ENCODE measurements at regions of chr2 and their contacts with region 1.

Region 1: GRCh38 chr2:143205106-143205764 is 76.0 kb downstream of the ARHGAP15 start:
- DNase-seq: peak in 2 of 9 experiments; percentile 52 to 71
- ATAC-seq: peak; percentile 77
- H3K4me3 ChIP-seq: no peak overlapping the region
- H3K4me3 Mint-ChIP-seq: no peak overlapping the region
- H3K27ac ChIP-seq: peak overlapping the region in 1 of 2 experiments; percentile 53
- H3K27ac Mint-ChIP-seq: peak overlapping the region; percentile 69
- H3K4me1 ChIP-seq: peaks cover 21% of the 10 kb centered on the region
- H3K4me1 Mint-ChIP-seq: peaks cover 66% of the 10 kb centered on the region
- H3K27me3 ChIP-seq: no peaks in the 10 kb centered on the region
- H3K27me3 Mint-ChIP-seq: no peaks in the 10 kb centered on the region
- CTCF ChIP-seq: peak; percentile 52

Region 2: GRCh38 chr2:143169105-143169504 is 36.1 kb before region 1 on chr2:
- CTCF ChIA-PET with region 1: interaction called, 3 read pairs
- POLR2A ChIA-PET with region 1: no interaction called
- intact Hi-C with region 1: loop called in 1 of 2 experiments (anchors 5 kb)
- DNase-seq: no peak
- ATAC-seq: no peak
- H3K4me3 ChIP-seq: no peak overlapping the region
- H3K4me3 Mint-ChIP-seq: no peak overlapping the region
- H3K27ac ChIP-seq: no peak overlapping the region
- H3K27ac Mint-ChIP-seq: no peak overlapping the region
- H3K4me1 ChIP-seq: peaks cover 23% of the 10 kb centered on the region
- H3K4me1 Mint-ChIP-seq: peaks cover 83% of the 10 kb centered on the region
- H3K27me3 ChIP-seq: no peaks in the 10 kb centered on the region
- H3K27me3 Mint-ChIP-seq: no peaks in the 10 kb centered on the region
- CTCF ChIP-seq: no peak

Region 3: DNA sequence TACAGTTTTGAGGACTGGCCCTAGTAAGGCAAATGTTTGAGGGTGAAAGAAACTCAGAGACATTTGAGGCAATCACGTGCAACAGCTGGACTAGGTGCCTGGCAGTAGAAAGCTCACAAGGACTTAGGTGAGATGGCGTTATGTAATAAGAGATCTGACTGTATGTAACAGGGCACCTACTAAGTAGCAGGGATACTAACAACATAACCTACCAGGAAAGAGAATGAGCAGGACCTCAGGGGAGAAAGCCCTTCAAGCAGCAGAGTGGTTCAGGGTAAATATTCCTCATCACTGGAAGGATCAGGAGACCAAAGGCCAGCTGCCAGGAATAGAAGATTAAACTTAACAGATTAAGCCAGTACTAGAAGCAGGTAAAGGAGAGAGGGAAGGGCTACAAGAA is 22.6 kb before region 1 on chr2:
- CTCF ChIA-PET with region 1: interaction called, 3 read pairs
- POLR2A ChIA-PET with region 1: interaction called, 6 read pairs
- intact Hi-C with region 1: loop called in 1 of 2 experiments (anchors 2 kb)
- DNase-seq: no peak
- ATAC-seq: no peak
- H3K4me3 ChIP-seq: no peak overlapping the region
- H3K4me3 Mint-ChIP-seq: no peak overlapping the region
- H3K27ac ChIP-seq: no peak overlapping the region
- H3K27ac Mint-ChIP-seq: peak overlapping the region; percentile 28
- H3K4me1 ChIP-seq: peaks cover 37% of the 10 kb centered on the region
- H3K4me1 Mint-ChIP-seq: peaks cover 76% of the 10 kb centered on the region
- H3K27me3 ChIP-seq: no peaks in the 10 kb centered on the region
- H3K27me3 Mint-ChIP-seq: no peaks in the 10 kb centered on the region
- CTCF ChIP-seq: no peak

Region 4: DNA sequence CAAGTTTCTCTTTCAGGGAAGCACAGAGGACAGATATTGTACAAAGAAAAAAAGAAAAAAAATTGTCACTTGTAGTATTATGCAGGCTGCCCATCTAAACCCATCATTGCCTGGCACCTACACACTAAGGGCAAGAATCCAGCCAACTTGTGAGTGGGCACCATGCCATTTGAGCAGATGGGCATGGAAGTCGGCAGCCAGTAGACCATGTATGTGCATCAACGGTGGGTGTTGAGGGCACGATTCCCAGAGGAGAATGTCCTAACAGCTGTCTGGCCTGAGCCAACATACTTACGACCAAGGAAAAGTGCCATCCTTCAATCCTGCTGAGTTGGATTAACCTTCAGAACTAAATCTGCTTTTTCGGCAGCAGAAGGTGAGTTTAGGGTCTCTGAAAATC is 12.1 kb before region 1 on chr2:
- CTCF ChIA-PET with region 1: interaction called, 6 read pairs
- POLR2A ChIA-PET with region 1: no interaction called
- intact Hi-C with region 1: loop called in 1 of 2 experiments (anchors 2 kb)
- DNase-seq: no peak
- ATAC-seq: no peak
- H3K4me3 ChIP-seq: no peak overlapping the region
- H3K4me3 Mint-ChIP-seq: no peak overlapping the region
- H3K27ac ChIP-seq: no peak overlapping the region
- H3K27ac Mint-ChIP-seq: peak overlapping the region; percentile 62
- H3K4me1 ChIP-seq: peaks cover 11% of the 10 kb centered on the region
- H3K4me1 Mint-ChIP-seq: peaks cover 58% of the 10 kb centered on the region
- H3K27me3 ChIP-seq: no peaks in the 10 kb centered on the region
- H3K27me3 Mint-ChIP-seq: no peaks in the 10 kb centered on the region
- CTCF ChIP-seq: no peak

Region 5: DNA sequence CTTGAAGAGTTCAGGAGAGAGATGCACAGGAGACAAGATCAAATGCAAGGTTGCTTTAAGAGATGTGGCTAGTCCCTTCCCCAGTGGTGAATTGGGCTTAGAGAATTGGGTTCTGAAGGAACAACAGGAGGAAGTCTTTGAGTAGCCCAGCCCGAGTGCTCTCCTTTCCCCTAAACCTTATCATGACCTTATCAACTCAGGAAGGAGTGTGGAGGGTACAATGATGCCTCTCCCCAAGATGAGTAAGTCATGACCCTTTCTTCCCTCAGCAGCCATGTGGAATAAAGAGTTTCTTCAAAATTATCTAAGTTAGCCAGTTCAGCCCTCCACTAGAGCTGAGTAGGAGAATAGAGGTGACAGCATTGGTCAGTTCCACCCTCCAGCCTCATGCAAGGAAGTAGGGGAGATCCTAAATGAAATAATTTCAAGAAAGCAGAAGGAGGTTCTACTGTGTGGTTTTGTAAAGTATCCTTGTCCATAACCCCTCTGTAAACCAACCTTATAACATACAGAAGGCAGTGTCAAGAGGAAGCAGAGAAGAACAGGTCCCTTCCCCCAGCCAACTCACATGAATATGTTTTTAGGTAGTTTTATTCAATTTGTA is 12.4 kb after region 1 on chr2:
- CTCF ChIA-PET with region 1: interaction called, 15 read pairs
- POLR2A ChIA-PET with region 1: interaction called, 3 read pairs
- intact Hi-C with region 1: loop called in 1 of 2 experiments (anchors 1 kb)
- DNase-seq: no peak
- ATAC-seq: no peak
- H3K4me3 ChIP-seq: no peak overlapping the region
- H3K4me3 Mint-ChIP-seq: no peak overlapping the region
- H3K27ac ChIP-seq: peak overlapping the region in 1 of 2 experiments; percentile 36
- H3K27ac Mint-ChIP-seq: peak overlapping the region; percentile 79
- H3K4me1 ChIP-seq: peaks cover 7% of the 10 kb centered on the region
- H3K4me1 Mint-ChIP-seq: peaks cover 54% of the 10 kb centered on the region
- H3K27me3 ChIP-seq: no peaks in the 10 kb centered on the region
- H3K27me3 Mint-ChIP-seq: no peaks in the 10 kb centered on the region
- CTCF ChIP-seq: no peak

Region 6: DNA sequence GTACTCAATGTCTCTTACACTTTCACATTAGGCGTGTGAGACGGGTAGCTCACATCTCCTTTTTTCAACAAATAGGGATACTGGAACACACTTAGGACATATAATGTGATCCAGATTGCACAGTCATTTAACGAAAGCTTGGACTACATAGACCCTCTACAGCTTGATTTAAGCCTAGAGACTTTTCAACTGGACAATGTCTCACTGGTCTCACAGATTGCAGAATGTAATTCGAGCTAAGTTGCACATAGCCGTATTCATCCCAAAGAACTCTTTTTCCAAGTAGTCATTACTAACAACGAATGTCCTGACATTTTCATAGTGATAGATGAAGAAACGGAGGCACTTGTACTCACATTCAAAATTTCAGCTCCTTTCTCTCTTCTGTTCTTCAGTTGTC is 702.6 kb after region 1 on chr2:
- CTCF ChIA-PET with region 1: no interaction called
- POLR2A ChIA-PET with region 1: no interaction called
- intact Hi-C with region 1: no loop called
- DNase-seq: no peak
- ATAC-seq: no peak
- H3K4me3 ChIP-seq: no peak overlapping the region
- H3K4me3 Mint-ChIP-seq: no peak overlapping the region
- H3K27ac ChIP-seq: no peak overlapping the region
- H3K27ac Mint-ChIP-seq: no peak overlapping the region
- H3K4me1 ChIP-seq: no peaks in the 10 kb centered on the region
- H3K4me1 Mint-ChIP-seq: peaks cover 6% of the 10 kb centered on the region
- H3K27me3 ChIP-seq: no peaks in the 10 kb centered on the region
- H3K27me3 Mint-ChIP-seq: peaks cover 3% of the 10 kb centered on the region
- CTCF ChIP-seq: no peak